ENCODE measurements at regions of chr3 and their contacts with region 1.

Region 1: GRCh38 chr3:127590593-127591477 is at the start of gene TPRA1:
- DNase-seq: peak; percentile 92
- ATAC-seq: peak; percentile 82
- H3K4me3 ChIP-seq: peak within 1 kb of the TSS; percentile 56 to 87 (median 76)
- H3K4me3 Mint-ChIP-seq: peak within 1 kb of the TSS; percentile 96
- H3K27ac ChIP-seq: peak within 1 kb of the TSS; percentile 15 to 69
- H3K27ac Mint-ChIP-seq: peak within 1 kb of the TSS; percentile 94
- H3K4me1 ChIP-seq: peaks cover 16 to 23% of the 10 kb centered on the region in 2 donors
- H3K4me1 Mint-ChIP-seq: peaks cover 31% of the 10 kb centered on the region
- H3K27me3 ChIP-seq: no peaks in the 10 kb centered on the region
- H3K27me3 Mint-ChIP-seq: no peaks in the 10 kb centered on the region
- CTCF ChIP-seq: no peak
- total RNA-seq, gene TPRA1: 19.8 and 25.2 TPM in 2 replicates

Region 2: DNA sequence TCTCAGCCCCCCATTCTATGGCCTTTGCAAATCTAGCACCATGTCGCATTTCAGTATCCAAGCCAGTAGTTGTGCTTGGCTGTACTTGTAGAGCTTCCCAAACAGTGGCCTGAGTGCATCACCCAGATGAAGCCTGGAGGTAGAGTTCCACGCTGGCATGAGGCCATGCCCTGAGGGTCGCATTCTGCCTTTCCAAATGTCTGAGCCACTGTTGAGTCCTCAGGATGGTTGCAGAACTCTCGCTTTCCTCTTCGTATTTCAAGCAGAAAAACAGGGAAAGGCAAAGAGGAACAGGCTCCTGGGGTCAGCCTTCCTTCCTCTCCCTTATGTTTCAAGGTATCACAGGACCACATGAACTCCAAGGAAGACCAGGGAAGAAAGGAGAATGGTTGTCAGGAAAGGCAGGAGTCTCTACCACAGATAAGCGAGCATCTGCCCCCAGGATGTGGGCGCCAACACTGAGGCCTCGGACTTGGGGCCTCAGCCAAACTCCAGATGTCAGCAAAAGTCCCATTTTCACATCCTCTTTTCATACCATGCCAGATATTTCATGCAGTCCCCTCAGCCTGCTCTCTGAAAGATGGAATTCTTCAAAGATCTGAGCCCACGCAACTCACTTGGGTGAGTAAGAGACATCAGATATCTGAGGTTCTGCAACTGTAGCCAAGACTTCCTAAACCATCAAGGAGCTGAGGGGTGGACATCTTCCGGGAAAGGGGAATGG is 283.6 kb before region 1 on chr3:
- CTCF ChIA-PET with region 1: no interaction called
- POLR2A ChIA-PET with region 1: no interaction called
- intact Hi-C with region 1: no loop called
- DNase-seq: no peak
- ATAC-seq: no peak
- H3K4me3 ChIP-seq: no peak overlapping the region
- H3K4me3 Mint-ChIP-seq: no peak overlapping the region
- H3K27ac ChIP-seq: no peak overlapping the region
- H3K27ac Mint-ChIP-seq: no peak overlapping the region
- H3K4me1 ChIP-seq: no peaks in the 10 kb centered on the region
- H3K4me1 Mint-ChIP-seq: no peaks in the 10 kb centered on the region
- H3K27me3 ChIP-seq: peaks cover 0 to 2% (median 0%) of the 10 kb centered on the region in 4 experiments
- H3K27me3 Mint-ChIP-seq: peaks cover 29% of the 10 kb centered on the region
- CTCF ChIP-seq: no peak

Region 3: GRCh38 chr3:127574880-127575878 is 15.7 kb before region 1 on chr3:
- CTCF ChIA-PET with region 1: interaction called, 23 read pairs
- POLR2A ChIA-PET with region 1: no interaction called
- intact Hi-C with region 1: loop called (anchors 2 kb)
- DNase-seq: peak; percentile 92
- ATAC-seq: peak; percentile 97
- H3K4me3 ChIP-seq: no peak overlapping the region
- H3K4me3 Mint-ChIP-seq: peak overlapping the region; percentile 52
- H3K27ac ChIP-seq: no peak overlapping the region
- H3K27ac Mint-ChIP-seq: peak overlapping the region; percentile 62
- H3K4me1 ChIP-seq: peaks cover 4 to 10% of the 10 kb centered on the region in 2 donors
- H3K4me1 Mint-ChIP-seq: peaks cover 9% of the 10 kb centered on the region
- H3K27me3 ChIP-seq: no peaks in the 10 kb centered on the region
- H3K27me3 Mint-ChIP-seq: no peaks in the 10 kb centered on the region
- CTCF ChIP-seq: peak; percentile 92

Region 4: DNA sequence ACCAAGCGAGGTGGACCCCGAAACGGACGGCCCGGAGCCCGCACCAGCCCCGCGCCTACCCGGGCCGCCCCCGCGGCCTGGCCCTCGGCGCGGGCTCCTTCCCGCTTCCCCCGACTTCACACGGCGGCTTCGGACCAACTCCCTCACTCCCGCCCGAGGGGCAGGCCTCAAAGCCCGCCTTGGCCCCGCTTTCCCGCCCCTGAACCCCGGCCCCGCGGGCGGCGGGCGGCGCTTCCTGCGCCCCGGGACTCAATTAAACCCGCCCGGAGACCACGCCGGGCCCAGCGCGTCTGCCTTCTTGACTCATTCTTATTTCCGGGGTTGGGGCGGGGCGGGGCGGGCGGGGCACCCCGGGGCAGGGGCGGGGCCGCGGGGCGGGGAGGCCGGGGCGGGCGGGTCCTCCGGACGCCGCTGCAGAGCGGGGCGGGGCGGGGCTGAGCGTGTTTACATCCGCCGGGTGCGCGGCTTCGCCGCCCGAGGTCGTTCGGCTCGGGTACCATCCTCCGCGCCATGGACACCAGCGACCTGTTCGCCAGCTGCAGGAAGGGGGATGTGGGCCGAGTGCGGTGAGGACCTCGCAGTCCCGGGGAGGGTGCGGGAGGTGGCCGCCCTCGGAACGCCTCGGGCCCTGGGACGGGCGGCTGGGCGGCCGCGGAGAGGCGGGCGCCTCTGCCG is 81.8 kb after region 1 on chr3 and contains the start of gene ABTB1:
- CTCF ChIA-PET with region 1: no interaction called
- POLR2A ChIA-PET with region 1: interaction called, 5 read pairs
- intact Hi-C with region 1: loop called (anchors 2 kb)
- DNase-seq: peak; percentile 88
- ATAC-seq: peak; percentile 87
- H3K4me3 ChIP-seq: peak within 1 kb of the TSS; percentile 41 to 87 (median 79)
- H3K4me3 Mint-ChIP-seq: peak within 1 kb of the TSS; percentile 94
- H3K27ac ChIP-seq: peak within 1 kb of the TSS; percentile 83 to 96
- H3K27ac Mint-ChIP-seq: peak within 1 kb of the TSS; percentile 98
- H3K4me1 ChIP-seq: peaks cover 16 to 22% of the 10 kb centered on the region in 2 donors
- H3K4me1 Mint-ChIP-seq: peaks cover 29% of the 10 kb centered on the region
- H3K27me3 ChIP-seq: no peaks in the 10 kb centered on the region
- H3K27me3 Mint-ChIP-seq: no peaks in the 10 kb centered on the region
- CTCF ChIP-seq: no peak
- total RNA-seq, gene ABTB1: 132 and 141 TPM in 2 replicates

Region 5: GRCh38 chr3:127750226-127751031 is 159.6 kb after region 1 on chr3:
- CTCF ChIA-PET with region 1: no interaction called
- POLR2A ChIA-PET with region 1: no interaction called
- intact Hi-C with region 1: loop called (anchors 10 kb)
- DNase-seq: peak; percentile 32
- ATAC-seq: no peak
- H3K4me3 ChIP-seq: no peak overlapping the region
- H3K4me3 Mint-ChIP-seq: peak overlapping the region; percentile 46
- H3K27ac ChIP-seq: no peak overlapping the region
- H3K27ac Mint-ChIP-seq: peak overlapping the region; percentile 43
- H3K4me1 ChIP-seq: peaks cover 27 to 36% of the 10 kb centered on the region in 2 donors
- H3K4me1 Mint-ChIP-seq: peaks cover 53% of the 10 kb centered on the region
- H3K27me3 ChIP-seq: no peaks in the 10 kb centered on the region
- H3K27me3 Mint-ChIP-seq: no peaks in the 10 kb centered on the region
- CTCF ChIP-seq: no peak

Region 6: DNA sequence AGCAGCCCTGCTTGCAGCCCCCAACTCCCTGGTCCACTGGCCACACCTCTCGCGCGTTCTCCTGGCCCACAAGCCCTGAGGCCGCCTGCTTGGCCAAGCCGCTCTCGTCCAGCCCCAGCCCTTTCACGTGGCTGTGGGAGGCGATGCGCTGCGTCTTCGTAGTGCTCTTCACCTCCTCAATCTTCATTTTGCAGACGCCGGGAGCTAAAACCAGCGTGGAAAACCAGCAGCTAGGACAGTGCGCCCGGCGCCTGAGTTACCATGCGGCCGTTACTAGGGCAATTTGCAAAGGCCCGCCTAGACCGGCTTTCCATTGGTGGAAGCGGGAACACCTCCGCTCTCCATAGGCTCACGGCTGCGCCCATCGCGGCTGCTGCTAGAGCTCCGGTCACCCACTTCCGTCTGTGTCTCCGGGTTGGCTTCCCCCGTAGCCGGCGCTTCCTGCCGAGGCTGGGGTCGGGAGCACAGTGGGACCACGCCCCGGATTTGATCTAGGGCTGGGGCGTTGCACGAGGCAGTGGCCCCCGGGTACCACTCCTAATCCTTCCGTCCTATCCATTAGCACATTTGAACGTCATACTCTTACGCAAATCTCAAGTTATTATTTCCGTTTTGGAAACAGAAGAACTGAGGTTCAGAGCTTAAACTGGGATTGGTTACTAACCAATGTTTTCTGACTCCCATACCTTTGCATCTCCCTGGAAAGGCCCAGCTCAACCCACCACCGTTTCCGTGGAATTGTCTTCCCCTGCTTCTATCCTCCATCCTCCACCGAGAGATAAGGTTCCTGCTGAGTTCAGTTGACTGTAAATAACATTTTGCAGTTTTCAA is 532.9 kb after region 1 on chr3 and contains the start of gene RUVBL1:
- CTCF ChIA-PET with region 1: no interaction called
- POLR2A ChIA-PET with region 1: no interaction called
- intact Hi-C with region 1: loop called (anchors 10 kb)
- DNase-seq: peak; percentile 97
- ATAC-seq: peak; percentile 97
- H3K4me3 ChIP-seq: peak within 1 kb of the TSS; percentile 68 to 94 (median 85)
- H3K4me3 Mint-ChIP-seq: peak within 1 kb of the TSS; percentile 98
- H3K27ac ChIP-seq: peak within 1 kb of the TSS; percentile 79 to 84
- H3K27ac Mint-ChIP-seq: peak within 1 kb of the TSS; percentile 86
- H3K4me1 ChIP-seq: peaks cover 15 to 20% of the 10 kb centered on the region in 2 donors
- H3K4me1 Mint-ChIP-seq: peaks cover 22% of the 10 kb centered on the region
- H3K27me3 ChIP-seq: no peaks in the 10 kb centered on the region
- H3K27me3 Mint-ChIP-seq: no peaks in the 10 kb centered on the region
- CTCF ChIP-seq: no peak
- total RNA-seq, gene RUVBL1: 19.9 and 20.4 TPM in 2 replicates

Measured in B cell (primary cell).